CD4-positive, alpha-beta memory T cell (primary cell): ENCODE measurements at regions of chr5 and their contacts with region 1.

Region 1: DNA sequence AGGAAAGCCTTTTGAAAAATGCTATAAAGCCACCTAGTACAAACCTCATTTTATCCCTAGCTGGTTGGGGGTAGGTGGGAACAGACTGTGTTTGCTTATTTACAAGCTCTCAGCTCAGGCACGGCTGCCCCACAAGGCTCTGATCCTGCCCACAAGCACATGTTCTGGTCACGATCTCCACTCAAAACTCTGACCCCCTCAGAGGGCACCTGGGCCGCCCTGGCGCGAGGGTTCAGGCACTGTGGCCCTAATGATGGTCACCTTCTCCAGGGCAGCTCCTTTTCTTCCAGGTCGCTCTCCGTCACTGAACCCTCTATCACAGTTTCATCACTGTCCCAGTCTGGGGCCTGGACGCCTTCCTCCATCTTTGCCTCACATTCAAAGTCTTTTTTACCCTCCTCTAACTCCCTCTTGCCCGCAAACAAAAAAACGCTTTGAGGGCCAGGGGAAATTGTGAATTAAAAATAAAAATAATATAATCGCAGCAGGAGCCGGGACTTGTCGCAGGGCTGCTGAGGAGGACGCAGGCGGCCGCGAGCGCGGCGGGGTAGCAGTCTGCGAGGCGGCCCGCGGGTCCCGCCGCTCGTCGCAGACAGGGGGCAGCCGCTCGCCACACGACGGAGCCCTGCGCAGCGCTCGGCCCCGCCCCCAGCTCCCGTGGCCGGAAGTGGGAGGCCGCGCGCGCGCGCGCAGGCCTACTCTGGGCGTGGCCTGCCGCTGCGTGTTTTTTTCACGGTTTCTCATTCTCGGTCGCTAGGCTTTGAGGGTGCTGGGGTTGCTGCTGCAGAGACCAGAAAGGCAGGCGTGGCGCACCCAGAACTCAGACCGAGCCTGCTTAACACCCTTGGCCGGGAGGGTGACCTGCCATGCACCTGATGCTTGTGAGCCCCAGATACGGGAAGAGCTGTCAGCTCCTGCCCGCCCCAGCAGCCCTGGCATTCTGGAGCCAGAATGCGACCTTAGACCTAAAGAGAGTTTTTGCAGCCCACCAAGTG is at the start of gene ANKRD31:
- DNase-seq: peak; percentile 85 to 92 (median 91)
- H3K4me3 ChIP-seq: peak within 1 kb of the TSS; percentile 63 to 84
- H3K4me3 Mint-ChIP-seq: peak within 1 kb of the TSS; percentile 91 to 95 (median 94)
- H3K27ac ChIP-seq: peak within 1 kb of the TSS; percentile 69
- H3K27ac Mint-ChIP-seq: peak within 1 kb of the TSS; percentile 87 to 98 (median 98)
- H3K4me1 ChIP-seq: peaks cover 14% of the 10 kb centered on the region
- H3K4me1 Mint-ChIP-seq: peaks cover 8 to 16% (median 11%) of the 10 kb centered on the region in 4 donors
- H3K27me3 ChIP-seq: no peaks in the 10 kb centered on the region
- H3K27me3 Mint-ChIP-seq: no peaks in the 10 kb centered on the region
- total RNA-seq, gene ANKRD31: 0.73 to 0.86 TPM

Region 2: DNA sequence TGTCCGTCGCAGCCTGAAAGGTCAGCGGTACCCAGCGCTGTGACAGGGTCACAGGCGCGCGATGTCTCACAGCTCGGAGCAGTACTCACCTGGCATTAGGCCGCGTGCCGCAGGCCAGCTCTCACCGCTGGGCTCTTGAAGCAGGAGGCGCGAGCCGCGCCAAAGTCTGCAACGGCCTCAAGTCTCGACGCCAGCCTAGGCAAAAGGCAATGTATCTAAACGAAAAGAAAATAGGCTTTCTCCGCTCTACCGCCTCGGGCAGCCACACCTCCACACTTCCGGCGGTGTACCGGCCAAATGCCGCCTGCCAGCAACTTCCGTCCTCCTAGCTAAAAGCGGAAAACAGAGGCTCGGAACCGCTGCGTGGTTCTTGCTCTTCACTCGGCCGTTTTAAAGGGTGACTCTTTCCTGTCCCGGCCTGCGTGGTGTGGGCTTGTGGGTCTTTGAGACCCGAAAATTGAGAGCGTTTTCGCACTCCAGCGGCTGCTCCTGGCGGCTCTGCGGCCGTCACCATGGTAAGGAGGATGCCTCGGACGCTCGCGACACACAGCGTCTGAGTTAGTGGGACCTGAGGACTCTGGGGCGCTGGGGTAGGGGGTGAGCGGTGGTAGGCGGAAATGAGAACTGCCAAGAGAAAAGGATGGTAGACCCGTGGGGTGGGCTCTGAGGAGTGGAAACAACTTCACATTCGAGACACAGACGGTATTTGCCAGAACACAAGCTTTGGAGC is 469.6 kb before region 1 on chr5 and contains the starts of genes GFM2 and NSA2:
- CTCF ChIA-PET with region 1: interaction called, 4 read pairs
- POLR2A ChIA-PET with region 1: interaction called, 7 read pairs
- intact Hi-C with region 1: loop called (anchors 1 kb)
- DNase-seq: peak; percentile 92 to 94 (median 92)
- H3K4me3 ChIP-seq: peak within 1 kb of the TSS; percentile 93 to 100
- H3K4me3 Mint-ChIP-seq: peak within 1 kb of the TSS; percentile 95 to 100 (median 100)
- H3K27ac ChIP-seq: peak within 1 kb of the TSS; percentile 86
- H3K27ac Mint-ChIP-seq: peak within 1 kb of the TSS; percentile 91 to 99 (median 99)
- H3K4me1 ChIP-seq: peaks cover 35% of the 10 kb centered on the region
- H3K4me1 Mint-ChIP-seq: peaks cover 22 to 51% (median 35%) of the 10 kb centered on the region in 4 donors
- H3K27me3 ChIP-seq: no peaks in the 10 kb centered on the region
- H3K27me3 Mint-ChIP-seq: no peaks in the 10 kb centered on the region
- total RNA-seq, gene GFM2: 21.3 to 21.6 TPM
- total RNA-seq, gene NSA2: 103 to 120 TPM

Region 3: GRCh38 chr5:74934949-74935751 is 301.5 kb before region 1 on chr5:
- CTCF ChIA-PET with region 1: interaction called, 14 read pairs
- POLR2A ChIA-PET with region 1: interaction called, 6 read pairs
- intact Hi-C with region 1: no loop called
- DNase-seq: peak in 4 of 5 donors; percentile 25 to 43 (median 30)
- H3K4me3 ChIP-seq: peak overlapping the region; percentile 2 to 8
- H3K4me3 Mint-ChIP-seq: peak overlapping the region; percentile 65 to 82 (median 74)
- H3K27ac ChIP-seq: peak overlapping the region; percentile 17
- H3K27ac Mint-ChIP-seq: peak overlapping the region; percentile 30 to 92 (median 64)
- H3K4me1 ChIP-seq: peaks cover 19% of the 10 kb centered on the region
- H3K4me1 Mint-ChIP-seq: peaks cover 16 to 30% (median 27%) of the 10 kb centered on the region in 4 donors
- H3K27me3 ChIP-seq: no peaks in the 10 kb centered on the region
- H3K27me3 Mint-ChIP-seq: no peaks in the 10 kb centered on the region

Region 4: GRCh38 chr5:75225506-75225905 is 11.1 kb before region 1 on chr5:
- CTCF ChIA-PET with region 1: interaction called, 19 read pairs
- POLR2A ChIA-PET with region 1: interaction called, 4 read pairs
- intact Hi-C with region 1: no loop called
- DNase-seq: no peak
- H3K4me3 ChIP-seq: no peak overlapping the region
- H3K4me3 Mint-ChIP-seq: no peak overlapping the region
- H3K27ac ChIP-seq: no peak overlapping the region
- H3K27ac Mint-ChIP-seq: no peak overlapping the region
- H3K4me1 ChIP-seq: no peaks in the 10 kb centered on the region
- H3K4me1 Mint-ChIP-seq: peaks cover 0 to 3% (median 0%) of the 10 kb centered on the region in 4 donors
- H3K27me3 ChIP-seq: no peaks in the 10 kb centered on the region
- H3K27me3 Mint-ChIP-seq: no peaks in the 10 kb centered on the region

Region 5: GRCh38 chr5:75336625-75337339 is 100.2 kb after region 1 on chr5 and contains the start of gene HMGCR:
- CTCF ChIA-PET with region 1: interaction called, 22 read pairs
- POLR2A ChIA-PET with region 1: interaction called, 23 read pairs
- intact Hi-C with region 1: loop called (anchors 1 kb)
- DNase-seq: peak; percentile 95 to 98 (median 97)
- H3K4me3 ChIP-seq: peak within 1 kb of the TSS; percentile 90
- H3K4me3 Mint-ChIP-seq: no peak within 1 kb of the TSS
- H3K27ac ChIP-seq: peak within 1 kb of the TSS; percentile 72
- H3K27ac Mint-ChIP-seq: peak within 1 kb of the TSS in 1 of 7 donors; percentile 96
- H3K4me1 ChIP-seq: peaks cover 26% of the 10 kb centered on the region
- H3K4me1 Mint-ChIP-seq: peaks cover 27 to 39% (median 29%) of the 10 kb centered on the region in 4 donors
- H3K27me3 ChIP-seq: no peaks in the 10 kb centered on the region
- H3K27me3 Mint-ChIP-seq: no peaks in the 10 kb centered on the region
- total RNA-seq, gene HMGCR: 39.6 to 43.0 TPM

Region 6: DNA sequence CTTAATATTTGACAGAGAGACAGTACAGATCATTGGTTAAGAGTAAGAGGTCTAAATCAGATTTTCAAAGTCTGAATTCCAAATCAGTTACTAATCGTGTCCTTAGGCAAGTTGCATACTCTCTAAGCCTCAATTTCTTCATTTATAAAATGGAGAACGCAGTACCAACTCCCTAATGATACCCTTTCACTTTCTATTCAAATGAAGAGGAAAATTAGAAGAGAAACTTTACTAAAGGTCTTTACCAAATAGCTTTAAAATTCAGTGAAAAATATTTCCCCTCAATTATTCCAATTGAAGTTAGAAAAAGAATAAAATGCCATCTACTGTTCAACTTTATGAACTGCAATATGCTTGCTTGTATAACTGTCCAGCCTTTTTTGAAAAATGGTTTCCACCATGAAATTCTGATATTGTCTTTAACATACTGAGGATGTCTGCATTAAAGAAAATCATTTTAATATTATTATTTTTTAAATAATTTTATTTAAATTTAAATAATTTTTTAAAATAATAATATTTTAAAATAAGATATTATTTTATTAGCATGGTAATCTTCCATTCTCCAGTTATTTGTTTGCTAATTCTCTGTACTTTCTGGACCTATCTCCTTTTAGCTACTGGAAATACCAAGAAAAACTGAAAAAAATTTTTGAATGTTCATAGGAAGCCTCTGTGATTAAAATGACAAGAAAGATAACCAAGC is 444.7 kb after region 1 on chr5:
- CTCF ChIA-PET with region 1: interaction called, 58 read pairs
- POLR2A ChIA-PET with region 1: interaction called, 5 read pairs
- intact Hi-C with region 1: loop called (anchors 1 kb)
- DNase-seq: peak in 4 of 5 donors; percentile 26 to 39 (median 34)
- H3K4me3 ChIP-seq: no peak overlapping the region
- H3K4me3 Mint-ChIP-seq: no peak overlapping the region
- H3K27ac ChIP-seq: no peak overlapping the region
- H3K27ac Mint-ChIP-seq: peak overlapping the region in 1 of 7 donors; percentile 29
- H3K4me1 ChIP-seq: peaks cover 5% of the 10 kb centered on the region
- H3K4me1 Mint-ChIP-seq: peaks cover 5 to 11% (median 9%) of the 10 kb centered on the region in 4 donors
- H3K27me3 ChIP-seq: no peaks in the 10 kb centered on the region
- H3K27me3 Mint-ChIP-seq: no peaks in the 10 kb centered on the region

Region 7: GRCh38 chr5:76256116-76256889 is 1019.7 kb after region 1 on chr5:
- CTCF ChIA-PET with region 1: interaction called, 6 read pairs
- POLR2A ChIA-PET with region 1: no interaction called
- intact Hi-C with region 1: loop called (anchors 5 kb)
- DNase-seq: peak; percentile 55 to 70 (median 64)
- H3K4me3 ChIP-seq: no peak overlapping the region
- H3K4me3 Mint-ChIP-seq: peak overlapping the region in 4 of 8 donors; percentile 17 to 70 (median 36)
- H3K27ac ChIP-seq: no peak overlapping the region
- H3K27ac Mint-ChIP-seq: peak overlapping the region in 1 of 7 donors; percentile 14
- H3K4me1 ChIP-seq: peaks cover 4% of the 10 kb centered on the region
- H3K4me1 Mint-ChIP-seq: peaks cover 6 to 9% (median 7%) of the 10 kb centered on the region in 4 donors
- H3K27me3 ChIP-seq: no peaks in the 10 kb centered on the region
- H3K27me3 Mint-ChIP-seq: peaks cover 0 to 6% of the 10 kb centered on the region in 2 donors